ENCODE measurements at regions of chr4 and their contacts with region 1.

Region 1: GRCh38 chr4:80153874-80154544 is 43.3 kb upstream of the PRDM8 start:
- DNase-seq: no peak
- H3K4me3 Mint-ChIP-seq: peak overlapping the region; percentile 43
- H3K27ac Mint-ChIP-seq: peak overlapping the region; percentile 88
- H3K4me1 Mint-ChIP-seq: peaks cover 18% of the 10 kb centered on the region
- H3K27me3 Mint-ChIP-seq: peaks cover 7% of the 10 kb centered on the region

Region 2: DNA sequence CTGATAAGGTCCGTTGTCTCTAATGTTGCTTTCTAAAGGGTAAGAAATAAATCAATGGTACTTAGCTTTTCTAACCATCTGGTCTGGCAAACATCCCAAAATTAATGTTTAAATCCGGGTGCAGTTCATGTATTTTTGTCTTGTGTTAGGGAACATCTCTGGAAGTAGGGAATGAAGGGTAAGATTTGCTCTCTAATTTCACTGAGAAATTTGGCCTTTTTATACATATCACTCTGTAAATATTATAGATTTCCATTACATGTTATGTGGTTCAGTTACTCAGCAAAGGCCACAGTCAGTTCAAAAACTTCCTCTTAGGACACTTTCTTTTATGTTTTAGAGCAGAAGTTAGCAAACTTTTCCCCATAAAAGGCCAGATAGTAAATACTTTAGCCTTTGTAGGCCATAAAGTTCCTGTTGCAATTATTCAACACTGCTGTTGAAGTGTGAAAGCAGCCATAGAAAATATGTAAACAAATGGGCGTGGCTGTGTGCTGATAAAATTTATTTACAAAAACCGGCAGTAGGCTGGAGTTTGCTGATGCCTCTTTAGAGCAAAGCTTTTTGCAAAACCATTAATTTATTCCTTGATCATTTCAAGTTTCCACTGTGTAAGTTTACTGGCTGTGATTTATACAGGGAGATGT is 299.0 kb before region 1 on chr4:
- intact Hi-C with region 1: no loop called
- DNase-seq: no peak
- H3K4me3 Mint-ChIP-seq: no peak overlapping the region
- H3K27ac Mint-ChIP-seq: no peak overlapping the region
- H3K4me1 Mint-ChIP-seq: no peaks in the 10 kb centered on the region
- H3K27me3 Mint-ChIP-seq: no peaks in the 10 kb centered on the region

Region 3: GRCh38 chr4:80138551-80139538 is 15.2 kb before region 1 on chr4:
- intact Hi-C with region 1: loop called (anchors 1 kb)
- DNase-seq: peak; percentile 88
- H3K4me3 Mint-ChIP-seq: peak overlapping the region; percentile 56
- H3K27ac Mint-ChIP-seq: peak overlapping the region; percentile 80
- H3K4me1 Mint-ChIP-seq: peaks cover 59% of the 10 kb centered on the region
- H3K27me3 Mint-ChIP-seq: no peaks in the 10 kb centered on the region

Region 4: DNA sequence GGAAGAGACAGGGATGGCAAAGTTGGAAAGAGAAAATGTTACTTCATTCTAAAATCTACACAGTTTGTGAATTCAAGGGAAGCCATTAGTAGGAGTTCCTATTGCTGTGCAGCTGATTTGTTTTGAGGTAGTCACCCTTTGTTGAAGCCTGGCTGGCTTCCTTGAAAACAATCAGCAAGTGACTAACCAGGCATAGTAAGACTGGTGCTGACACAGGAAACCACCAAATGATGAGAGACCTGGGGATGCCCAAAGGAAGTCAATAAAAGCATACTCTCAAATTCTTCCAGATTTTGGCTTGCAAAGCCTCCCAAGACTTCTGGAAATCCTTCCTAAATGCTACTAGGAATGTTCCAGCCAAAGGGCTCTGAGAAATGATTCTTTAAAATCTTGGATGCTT is 19.4 kb after region 1 on chr4:
- intact Hi-C with region 1: loop called (anchors 1 kb)
- DNase-seq: peak; percentile 89
- H3K4me3 Mint-ChIP-seq: peak overlapping the region; percentile 68
- H3K27ac Mint-ChIP-seq: peak overlapping the region; percentile 95
- H3K4me1 Mint-ChIP-seq: peaks cover 50% of the 10 kb centered on the region
- H3K27me3 Mint-ChIP-seq: no peaks in the 10 kb centered on the region

Region 5: DNA sequence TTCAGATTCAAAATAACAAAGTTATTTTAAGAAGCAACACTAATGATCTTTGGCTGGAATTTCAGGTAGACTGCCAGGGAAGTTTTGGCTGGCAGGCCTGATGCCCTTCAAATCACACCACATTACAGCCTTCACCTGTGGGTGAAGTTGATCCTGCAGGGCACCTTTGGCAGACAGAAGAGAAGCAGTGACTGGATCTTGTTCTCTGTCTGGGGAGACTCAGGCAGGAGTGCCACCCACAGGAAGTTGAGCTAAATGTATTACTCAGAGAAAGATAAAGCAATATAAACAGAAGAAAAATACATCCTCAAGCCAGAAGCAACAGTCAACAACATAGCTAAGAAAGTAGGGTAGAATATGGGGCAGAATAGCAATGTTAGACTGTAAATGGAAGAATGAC is 168.7 kb after region 1 on chr4:
- intact Hi-C with region 1: no loop called
- DNase-seq: peak; percentile 58
- H3K4me3 Mint-ChIP-seq: no peak overlapping the region
- H3K27ac Mint-ChIP-seq: no peak overlapping the region
- H3K4me1 Mint-ChIP-seq: no peaks in the 10 kb centered on the region
- H3K27me3 Mint-ChIP-seq: peaks cover 5% of the 10 kb centered on the region

Measured in activated CD4-positive, alpha-beta T cell treated with anti-CD3 and anti-CD28 coated beads, Interleukin-2, amount 10 ng/mL, durations not matched to agents 24 days and 14 days (primary cell).